T-cell (primary cell): ENCODE measurements at regions of chr4 and their contacts with region 1.

Region 1: GRCh38 chr4:78889955-78890354 is 49.3 kb downstream of the PAQR3 start:
- DNase-seq: no peak
- ATAC-seq: no peak
- H3K4me3 ChIP-seq: no peak overlapping the region
- H3K4me3 Mint-ChIP-seq: no peak overlapping the region
- H3K27ac ChIP-seq: no peak overlapping the region
- H3K27ac Mint-ChIP-seq: no peak overlapping the region
- H3K4me1 ChIP-seq: no peaks in the 10 kb centered on the region
- H3K4me1 Mint-ChIP-seq: peaks cover 0 to 9% (median 7%) of the 10 kb centered on the region in 3 donors
- H3K27me3 ChIP-seq: no peaks in the 10 kb centered on the region
- H3K27me3 Mint-ChIP-seq: no peaks in the 10 kb centered on the region

Region 2: DNA sequence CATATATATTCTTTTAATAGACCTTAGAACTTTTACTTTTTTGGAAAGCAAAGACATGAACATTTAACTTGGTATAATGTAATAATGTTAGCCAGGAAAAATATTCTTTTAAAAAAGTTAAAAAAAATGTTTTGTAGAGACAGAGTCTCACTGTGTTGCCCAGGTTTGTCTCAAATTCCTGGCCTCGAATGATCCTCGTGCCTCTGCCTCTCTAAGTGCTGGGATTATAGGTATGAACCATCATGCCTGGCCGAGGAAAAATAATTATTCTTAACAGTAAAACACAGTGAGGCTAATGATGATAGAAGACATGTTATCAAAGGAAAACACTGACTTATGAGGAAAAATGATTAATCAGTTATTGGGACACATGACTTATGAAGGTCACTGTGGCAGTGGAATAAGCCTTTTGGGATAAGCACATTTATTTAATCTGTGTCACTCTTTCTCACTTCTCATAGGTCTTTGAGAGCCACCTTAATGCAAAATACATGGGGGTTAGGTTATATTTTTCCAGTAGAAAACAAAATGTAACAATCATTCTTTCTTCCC is 119.8 kb before region 1 on chr4:
- CTCF ChIA-PET with region 1: no interaction called
- POLR2A ChIA-PET with region 1: interaction called in 1 of 2 experiments, 10 read pairs
- DNase-seq: no peak
- ATAC-seq: no peak
- H3K4me3 ChIP-seq: no peak overlapping the region
- H3K4me3 Mint-ChIP-seq: no peak overlapping the region
- H3K27ac ChIP-seq: no peak overlapping the region
- H3K27ac Mint-ChIP-seq: no peak overlapping the region
- H3K4me1 ChIP-seq: peaks cover 3 to 4% of the 10 kb centered on the region in 2 experiments
- H3K4me1 Mint-ChIP-seq: peaks cover 0 to 11% (median 10%) of the 10 kb centered on the region in 3 donors
- H3K27me3 ChIP-seq: no peaks in the 10 kb centered on the region
- H3K27me3 Mint-ChIP-seq: no peaks in the 10 kb centered on the region